ENCODE measurements at regions of chr4 and their contacts with region 1.

Region 1: DNA sequence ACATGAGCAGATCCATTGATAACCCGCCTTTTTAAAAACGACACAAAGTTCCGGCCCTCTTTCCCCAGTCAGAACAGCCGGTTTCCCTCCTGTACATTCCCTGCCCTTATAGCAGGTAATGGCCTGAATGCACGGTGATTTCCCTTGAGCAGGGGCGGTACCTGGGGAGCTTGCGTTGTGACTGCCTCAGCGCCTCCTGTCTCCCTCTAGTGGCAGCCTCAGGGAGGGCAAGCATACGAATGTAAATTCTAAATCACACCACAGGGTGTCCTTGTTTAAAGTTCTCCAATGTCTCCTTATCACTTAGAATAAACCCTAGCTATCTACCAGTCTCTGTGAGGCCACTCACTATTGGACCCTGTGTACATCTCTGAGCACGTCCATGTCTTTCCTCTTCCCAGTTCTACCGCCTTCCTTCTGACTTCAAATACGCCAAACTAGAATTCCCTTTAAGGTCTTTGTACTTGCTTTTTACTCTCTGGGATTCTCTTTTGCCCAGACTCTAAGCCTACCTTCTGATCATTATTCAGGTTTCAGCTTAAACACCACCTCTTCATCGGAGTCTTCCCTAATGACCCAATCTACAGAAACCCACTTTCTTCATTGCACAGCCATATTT is 18.4 kb upstream of the LDB2 start:
- DNase-seq: peak; percentile 74
- H3K4me3 ChIP-seq: no peak overlapping the region
- H3K27ac ChIP-seq: no peak overlapping the region
- H3K4me1 ChIP-seq: peaks cover 9% of the 10 kb centered on the region
- H3K27me3 ChIP-seq: no peaks in the 10 kb centered on the region
- CTCF ChIP-seq: peak; percentile 87 to 93
- POLR2A ChIP-seq: no peak

Region 2: DNA sequence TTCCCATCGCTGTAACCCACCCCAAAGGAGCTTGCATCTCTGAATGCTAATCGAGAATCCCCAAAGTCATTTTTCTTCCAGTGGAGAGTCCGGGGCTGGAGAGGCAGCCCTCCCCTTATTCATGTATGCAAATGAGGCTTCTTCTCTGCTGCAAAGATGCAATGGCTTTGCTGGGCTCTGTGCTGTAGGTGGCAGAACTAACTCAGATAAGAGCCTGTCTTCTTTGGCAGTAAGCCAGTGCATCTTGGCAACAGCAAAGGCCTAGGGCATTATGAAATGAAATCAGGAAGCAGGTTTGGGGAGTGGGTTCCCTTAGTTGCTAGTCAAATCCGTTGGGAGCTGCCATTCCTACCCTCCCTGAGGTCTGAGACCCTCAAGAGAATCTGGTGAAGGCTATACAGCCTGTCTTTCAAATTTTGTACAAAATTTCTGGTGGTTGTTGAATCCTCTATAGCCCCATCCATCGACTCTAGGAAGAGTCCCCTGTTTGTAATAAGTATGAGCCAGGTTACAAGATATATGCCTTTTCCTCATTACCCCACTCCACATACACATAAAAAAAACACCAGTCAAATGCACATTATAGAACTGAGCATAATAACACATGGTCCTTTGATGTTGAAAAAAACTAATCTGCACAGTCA is 399.9 kb before region 1 on chr4:
- CTCF ChIA-PET with region 1: interaction called, 6 read pairs
- POLR2A ChIA-PET with region 1: no interaction called
- dilution Hi-C with region 1: no loop called
- intact Hi-C with region 1: loop called (anchors 5 kb)
- DNase-seq: peak; percentile 76
- H3K4me3 ChIP-seq: no peak overlapping the region
- H3K27ac ChIP-seq: no peak overlapping the region
- H3K4me1 ChIP-seq: no peaks in the 10 kb centered on the region
- H3K27me3 ChIP-seq: no peaks in the 10 kb centered on the region
- CTCF ChIP-seq: peak; percentile 16 to 23
- POLR2A ChIP-seq: no peak

Region 3: GRCh38 chr4:16794816-16795445 is 121.9 kb before region 1 on chr4:
- CTCF ChIA-PET with region 1: interaction called, 54 read pairs
- POLR2A ChIA-PET with region 1: no interaction called
- dilution Hi-C with region 1: no loop called
- intact Hi-C with region 1: loop called (anchors 1 kb)
- DNase-seq: peak; percentile 83
- H3K4me3 ChIP-seq: no peak overlapping the region
- H3K27ac ChIP-seq: no peak overlapping the region
- H3K4me1 ChIP-seq: peaks cover 19% of the 10 kb centered on the region
- H3K27me3 ChIP-seq: no peaks in the 10 kb centered on the region
- CTCF ChIP-seq: peak; percentile 90 to 91
- POLR2A ChIP-seq: no peak

Region 4: GRCh38 chr4:16897991-16898827 is 18.6 kb before region 1 on chr4 and contains the start of gene LDB2:
- CTCF ChIA-PET with region 1: interaction called, 17 read pairs
- POLR2A ChIA-PET with region 1: no interaction called
- dilution Hi-C with region 1: no loop called
- intact Hi-C with region 1: no loop called
- DNase-seq: peak; percentile 88
- H3K4me3 ChIP-seq: peak within 1 kb of the TSS; percentile 66 to 97 (median 86)
- H3K27ac ChIP-seq: peak within 1 kb of the TSS; percentile 59
- H3K4me1 ChIP-seq: peaks cover 38% of the 10 kb centered on the region
- H3K27me3 ChIP-seq: no peaks in the 10 kb centered on the region
- CTCF ChIP-seq: no peak
- POLR2A ChIP-seq: no peak
- total RNA-seq, gene LDB2: 80.9 and 127 TPM in 2 replicates

Region 5: DNA sequence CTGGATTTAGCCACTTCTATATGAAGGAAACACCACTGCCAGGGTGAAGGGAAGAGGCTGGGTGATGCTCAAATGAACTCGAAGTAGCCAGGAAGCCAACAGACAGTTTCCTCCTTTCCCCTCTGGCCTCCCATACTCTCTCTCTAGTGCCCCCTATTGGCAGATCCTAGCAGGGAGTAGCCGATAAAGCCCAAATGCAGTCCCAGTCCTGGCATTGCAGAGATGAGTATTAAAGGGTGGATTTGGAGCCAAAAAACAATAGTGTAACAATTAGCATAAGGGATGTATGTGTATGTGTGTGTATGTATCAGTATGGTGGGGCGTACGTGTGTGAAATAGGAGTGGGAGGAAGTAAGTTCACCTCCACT is 195.4 kb after region 1 on chr4:
- CTCF ChIA-PET with region 1: interaction called, 11 read pairs
- POLR2A ChIA-PET with region 1: no interaction called
- dilution Hi-C with region 1: no loop called
- intact Hi-C with region 1: loop called (anchors 5 kb)
- DNase-seq: no peak
- H3K4me3 ChIP-seq: no peak overlapping the region
- H3K27ac ChIP-seq: no peak overlapping the region
- H3K4me1 ChIP-seq: no peaks in the 10 kb centered on the region
- H3K27me3 ChIP-seq: no peaks in the 10 kb centered on the region
- CTCF ChIP-seq: peak; percentile 44 to 52
- POLR2A ChIP-seq: no peak

Region 6: DNA sequence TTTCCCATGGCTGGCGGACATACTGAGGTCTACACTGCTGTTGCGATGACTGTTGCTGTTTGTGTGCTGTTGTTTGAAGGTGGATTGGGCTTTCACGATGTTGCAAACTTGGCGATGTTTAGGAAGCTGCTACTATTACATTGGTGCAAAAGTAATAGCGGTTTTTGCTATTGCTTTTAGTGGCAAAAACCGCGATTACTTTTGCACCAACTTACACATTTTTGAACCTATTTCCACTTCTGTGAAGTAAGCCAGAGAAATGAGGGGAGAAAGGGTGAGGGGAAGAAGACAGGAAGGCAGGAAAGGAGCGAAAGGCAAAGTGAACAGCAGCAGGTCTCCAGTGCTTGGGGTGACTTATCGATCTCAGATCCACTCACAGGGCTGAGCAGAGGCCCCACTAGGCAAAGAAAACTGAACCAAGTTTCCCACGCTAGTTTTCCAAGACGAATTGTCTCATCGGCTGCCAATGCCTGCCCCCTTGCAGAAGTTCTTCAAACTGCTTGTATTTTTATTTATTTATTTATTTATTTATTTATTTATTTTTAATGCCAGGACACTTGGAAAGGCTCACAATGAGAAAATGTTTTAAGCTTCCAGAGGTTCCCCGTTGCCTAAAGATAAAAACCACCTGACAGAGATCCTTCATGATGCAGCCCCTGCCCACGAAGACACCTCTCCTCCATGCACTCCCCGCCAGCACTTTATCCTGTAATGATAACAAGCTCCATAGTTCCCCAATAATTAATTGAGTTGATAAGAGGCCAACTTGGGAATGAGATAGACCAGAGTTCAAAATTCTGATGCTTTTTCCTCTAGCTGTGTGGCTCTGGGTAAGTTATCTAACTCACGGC is 551.8 kb after region 1 on chr4:
- CTCF ChIA-PET with region 1: interaction called, 11 read pairs
- POLR2A ChIA-PET with region 1: no interaction called
- dilution Hi-C with region 1: no loop called
- intact Hi-C with region 1: loop called (anchors 2 kb)
- DNase-seq: peak; percentile 58
- H3K4me3 ChIP-seq: no peak overlapping the region
- H3K27ac ChIP-seq: no peak overlapping the region
- H3K4me1 ChIP-seq: no peaks in the 10 kb centered on the region
- H3K27me3 ChIP-seq: no peaks in the 10 kb centered on the region
- CTCF ChIP-seq: peak; percentile 28 to 52
- POLR2A ChIP-seq: no peak

Measured in endothelial cell of umbilical vein (primary cell).